ENCODE measurements at regions of chr12 and their contacts with region 1.

Region 1: DNA sequence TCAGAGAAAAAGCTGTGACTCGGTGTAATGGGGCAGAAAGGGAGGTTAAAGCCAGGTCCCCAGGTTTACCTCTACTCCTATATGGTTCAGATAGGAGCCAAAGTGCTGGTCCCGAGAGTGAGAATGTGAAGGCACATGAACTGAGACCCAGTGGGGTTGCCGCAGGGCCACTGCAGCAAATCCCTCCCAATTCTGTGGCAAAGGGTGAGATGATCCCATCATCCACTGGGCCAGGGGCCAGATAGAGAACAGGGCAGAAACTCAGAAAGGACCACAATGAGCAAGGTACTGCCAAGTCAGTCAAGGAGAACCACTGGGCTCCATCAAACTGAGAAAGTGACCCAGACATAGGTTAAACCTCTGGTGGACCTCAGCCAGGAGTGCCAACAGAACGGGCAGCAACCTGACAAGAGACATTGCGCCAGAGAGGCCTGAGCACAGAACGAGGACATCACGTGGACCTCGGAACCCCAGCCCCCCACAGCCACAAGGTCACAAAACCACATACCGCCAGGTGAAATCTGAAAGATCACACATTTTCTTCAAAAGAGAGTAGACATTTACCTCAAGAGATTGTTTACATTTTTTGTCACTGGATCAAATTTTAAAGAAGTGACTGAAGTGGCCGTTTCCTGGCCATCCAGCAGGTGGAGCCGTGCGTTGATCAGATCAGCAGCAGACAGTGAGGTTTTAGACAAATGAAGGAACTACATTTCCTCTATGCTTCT is 20.5 kb upstream of the ITPR2 start:
- DNase-seq: peak; percentile 59 to 86
- ATAC-seq: peak; percentile 91 to 97 (median 94)
- H3K4me3 ChIP-seq: no peak overlapping the region
- H3K4me3 Mint-ChIP-seq: no peak overlapping the region
- H3K27ac ChIP-seq: no peak overlapping the region
- H3K27ac Mint-ChIP-seq: no peak overlapping the region
- H3K4me1 ChIP-seq: peaks cover 4% of the 10 kb centered on the region
- H3K4me1 Mint-ChIP-seq: no peaks in the 10 kb centered on the region
- H3K27me3 ChIP-seq: no peaks in the 10 kb centered on the region
- H3K27me3 Mint-ChIP-seq: no peaks in the 10 kb centered on the region
- CTCF ChIP-seq: peak; percentile 82

Region 2: GRCh38 chr12:26701604-26702215 is 151.8 kb before region 1 on chr12:
- intact Hi-C with region 1: no loop called
- DNase-seq: peak in 1 of 2 donors; percentile 50
- ATAC-seq: peak in 1 of 3 donors; percentile 37
- H3K4me3 ChIP-seq: no peak overlapping the region
- H3K4me3 Mint-ChIP-seq: no peak overlapping the region
- H3K27ac ChIP-seq: no peak overlapping the region
- H3K27ac Mint-ChIP-seq: no peak overlapping the region
- H3K4me1 ChIP-seq: no peaks in the 10 kb centered on the region
- H3K4me1 Mint-ChIP-seq: peaks cover 5 to 6% of the 10 kb centered on the region in 2 donors
- H3K27me3 ChIP-seq: no peaks in the 10 kb centered on the region
- H3K27me3 Mint-ChIP-seq: no peaks in the 10 kb centered on the region
- CTCF ChIP-seq: peak; percentile 64

Region 3: DNA sequence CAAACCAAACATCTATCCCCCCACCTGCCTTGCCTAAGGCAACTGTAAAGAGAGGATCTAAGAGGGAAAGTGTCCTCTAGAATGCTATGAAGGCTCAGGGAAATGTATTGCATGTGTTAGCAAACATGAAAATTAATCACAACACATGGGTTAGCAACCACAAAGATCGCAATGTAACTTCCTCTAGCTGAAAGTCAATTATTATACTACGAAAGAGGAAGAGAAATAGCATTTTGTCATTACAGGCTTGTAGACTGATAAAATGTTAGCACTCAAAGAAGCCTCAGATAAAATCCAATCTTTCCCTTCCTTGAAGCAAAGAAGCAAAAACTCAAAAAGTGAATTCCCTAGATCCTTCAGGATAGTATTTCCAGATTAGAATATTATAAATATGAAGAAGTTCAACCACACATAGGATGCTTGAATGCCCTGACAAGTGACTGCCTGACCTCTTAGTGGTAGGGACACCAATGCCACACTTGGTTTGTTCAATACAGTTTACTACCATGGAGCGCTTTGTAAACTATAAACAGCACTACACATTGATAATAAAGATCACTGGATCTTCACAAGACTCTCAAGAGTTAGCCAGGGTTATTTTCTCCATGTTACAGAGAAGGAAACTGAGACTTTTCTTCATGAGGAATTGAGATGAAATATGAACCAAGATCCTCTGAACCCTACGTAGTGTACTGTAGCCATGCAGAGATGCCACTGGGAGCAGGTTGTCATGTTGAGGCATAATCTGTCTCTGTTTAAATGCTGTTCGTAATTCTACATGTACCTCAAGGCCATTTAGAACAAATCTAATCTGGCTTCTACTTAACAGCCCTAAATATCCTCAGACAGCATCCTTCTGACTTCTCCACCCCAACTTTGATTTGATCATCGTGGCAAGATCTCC is 121.2 kb before region 1 on chr12:
- intact Hi-C with region 1: no loop called
- DNase-seq: no peak
- ATAC-seq: peak; percentile 70 to 81 (median 80)
- H3K4me3 ChIP-seq: no peak overlapping the region
- H3K4me3 Mint-ChIP-seq: no peak overlapping the region
- H3K27ac ChIP-seq: peak overlapping the region; percentile 41
- H3K27ac Mint-ChIP-seq: peak overlapping the region; percentile 65 to 71
- H3K4me1 ChIP-seq: peaks cover 7% of the 10 kb centered on the region
- H3K4me1 Mint-ChIP-seq: peaks cover 64 to 71% of the 10 kb centered on the region in 2 donors
- H3K27me3 ChIP-seq: no peaks in the 10 kb centered on the region
- H3K27me3 Mint-ChIP-seq: no peaks in the 10 kb centered on the region
- CTCF ChIP-seq: no peak

Region 4: DNA sequence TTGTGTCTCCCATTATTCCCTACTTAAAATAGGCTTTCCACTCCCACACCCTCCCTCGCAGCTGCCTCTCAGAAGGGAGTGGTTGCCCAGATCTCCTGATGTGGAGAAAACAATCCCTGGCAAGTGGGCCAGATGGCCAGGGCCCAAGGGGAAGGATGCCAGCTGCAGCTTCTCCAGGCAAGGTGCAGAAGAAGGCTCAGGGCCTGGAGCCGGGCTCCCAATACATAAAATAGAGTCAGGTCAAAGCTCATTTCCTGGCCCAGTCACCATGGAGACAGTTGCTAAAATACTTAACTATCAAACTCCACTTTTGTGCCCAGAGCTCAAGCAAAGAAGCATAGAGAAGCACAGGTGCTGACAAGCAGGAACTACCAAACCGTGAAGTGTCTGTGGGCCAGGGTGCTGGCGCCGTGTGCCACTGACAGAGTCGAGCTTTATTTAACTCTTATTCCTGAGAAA is 25.2 kb after region 1 on chr12:
- intact Hi-C with region 1: no loop called
- DNase-seq: no peak
- ATAC-seq: no peak
- H3K4me3 ChIP-seq: no peak overlapping the region
- H3K4me3 Mint-ChIP-seq: no peak overlapping the region
- H3K27ac ChIP-seq: no peak overlapping the region
- H3K27ac Mint-ChIP-seq: no peak overlapping the region
- H3K4me1 ChIP-seq: peaks cover 4% of the 10 kb centered on the region
- H3K4me1 Mint-ChIP-seq: peaks cover 0 to 5% of the 10 kb centered on the region in 2 donors
- H3K27me3 ChIP-seq: no peaks in the 10 kb centered on the region
- H3K27me3 Mint-ChIP-seq: peaks cover 6 to 16% of the 10 kb centered on the region in 2 donors
- CTCF ChIP-seq: no peak

Region 5: GRCh38 chr12:27142101-27142721 is 288.7 kb after region 1 on chr12:
- intact Hi-C with region 1: loop called (anchors 1 kb)
- DNase-seq: peak in 1 of 2 donors; percentile 78
- ATAC-seq: peak; percentile 59 to 82 (median 73)
- H3K4me3 ChIP-seq: no peak overlapping the region
- H3K4me3 Mint-ChIP-seq: peak overlapping the region; percentile 69
- H3K27ac ChIP-seq: no peak overlapping the region
- H3K27ac Mint-ChIP-seq: peak overlapping the region in 1 of 2 donors; percentile 26
- H3K4me1 ChIP-seq: peaks cover 4% of the 10 kb centered on the region
- H3K4me1 Mint-ChIP-seq: peaks cover 8 to 13% of the 10 kb centered on the region in 2 donors
- H3K27me3 ChIP-seq: no peaks in the 10 kb centered on the region
- H3K27me3 Mint-ChIP-seq: no peaks in the 10 kb centered on the region
- CTCF ChIP-seq: peak; percentile 72